ENCODE measurements at regions of chr4 and their contacts with region 1.

Region 1: DNA sequence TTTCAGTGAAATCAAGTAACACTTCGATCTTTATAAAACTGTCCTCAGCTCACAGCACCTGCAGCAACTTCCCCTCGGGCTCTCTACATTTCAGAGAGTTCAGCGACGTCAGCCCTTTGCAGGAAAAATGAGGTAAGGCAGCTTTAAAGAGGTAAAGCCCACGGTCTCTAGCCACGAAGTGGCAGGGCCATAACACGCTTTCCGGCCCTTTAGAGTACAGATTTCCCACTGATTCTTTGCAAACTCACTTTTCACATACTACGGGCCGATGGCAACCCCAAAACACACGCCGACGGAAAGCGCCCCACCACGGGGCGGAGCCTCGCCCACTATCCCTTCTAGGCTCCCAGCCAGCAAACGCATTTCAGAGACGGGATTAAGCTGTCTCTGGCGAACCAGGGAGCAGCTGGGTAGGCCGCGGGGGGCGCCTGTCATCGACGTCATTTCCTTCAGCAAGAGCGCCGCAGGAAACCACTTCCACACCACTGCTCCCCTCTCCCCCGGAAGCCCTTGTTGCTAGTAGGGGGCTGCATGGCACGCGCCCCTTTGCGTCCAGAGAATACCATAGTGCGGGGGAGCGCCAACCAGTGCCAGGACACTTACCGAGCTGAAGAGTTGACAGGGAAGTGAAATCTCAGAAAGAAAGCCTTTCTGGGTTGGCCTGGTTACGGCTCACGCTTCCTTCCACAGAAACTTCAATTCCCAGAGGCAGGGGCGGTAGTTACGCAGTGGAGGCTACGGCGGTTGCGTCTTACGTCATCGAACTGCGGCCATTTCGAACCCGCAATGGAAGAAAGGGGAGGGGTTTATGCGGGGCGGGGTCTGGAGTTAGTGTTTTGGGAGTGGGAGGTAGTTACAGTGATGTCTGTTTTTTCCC is at the start of gene TRMT10A:
- DNase-seq: peak; percentile 96
- H3K4me3 ChIP-seq: peak within 1 kb of the TSS; percentile 80
- H3K27ac ChIP-seq: peak within 1 kb of the TSS; percentile 78
- H3K4me1 ChIP-seq: peaks cover 12% of the 10 kb centered on the region
- CTCF ChIP-seq: no peak
- total RNA-seq, gene TRMT10A: 7.9 and 13.3 TPM in 2 replicates

Region 2: GRCh38 chr4:99013402-99013843 is 550.1 kb before region 1 on chr4:
- CTCF ChIA-PET with region 1: no interaction called
- POLR2A ChIA-PET with region 1: no interaction called
- intact Hi-C with region 1: no loop called
- DNase-seq: no peak
- H3K4me3 ChIP-seq: no peak overlapping the region
- H3K27ac ChIP-seq: no peak overlapping the region
- H3K4me1 ChIP-seq: no peaks in the 10 kb centered on the region
- CTCF ChIP-seq: no peak

Region 3: DNA sequence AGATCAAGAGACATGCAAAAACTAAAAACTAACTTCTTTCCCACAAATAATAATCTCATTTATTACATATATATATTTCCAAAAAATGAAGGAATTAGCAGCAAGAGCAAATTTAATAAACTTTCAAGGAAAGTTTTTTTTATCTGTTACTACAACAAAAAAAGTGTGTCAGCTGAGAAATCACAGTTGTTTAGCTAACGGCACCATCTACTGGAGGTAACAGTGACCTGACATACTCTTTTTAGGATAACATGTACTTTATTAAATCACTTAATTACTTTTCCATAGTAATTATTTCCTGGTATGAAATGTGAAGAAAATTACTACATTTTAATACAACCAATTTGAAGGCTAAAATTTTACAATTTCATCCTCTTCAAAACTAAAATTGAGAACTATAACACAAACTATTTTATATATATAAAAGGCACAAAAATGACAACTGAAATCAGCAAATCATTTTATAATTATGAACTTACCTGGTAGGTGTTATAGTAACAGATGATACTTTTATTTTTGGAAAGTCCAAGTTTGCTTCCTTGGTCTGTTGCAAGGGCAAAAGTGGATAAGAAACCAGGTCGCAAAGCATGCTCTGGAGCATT is 321.6 kb after region 1 on chr4:
- CTCF ChIA-PET with region 1: no interaction called
- POLR2A ChIA-PET with region 1: no interaction called
- intact Hi-C with region 1: loop called (anchors 1 kb)
- DNase-seq: peak; percentile 66
- H3K4me3 ChIP-seq: no peak overlapping the region
- H3K27ac ChIP-seq: no peak overlapping the region
- H3K4me1 ChIP-seq: no peaks in the 10 kb centered on the region
- CTCF ChIP-seq: peak; percentile 88

Region 4: DNA sequence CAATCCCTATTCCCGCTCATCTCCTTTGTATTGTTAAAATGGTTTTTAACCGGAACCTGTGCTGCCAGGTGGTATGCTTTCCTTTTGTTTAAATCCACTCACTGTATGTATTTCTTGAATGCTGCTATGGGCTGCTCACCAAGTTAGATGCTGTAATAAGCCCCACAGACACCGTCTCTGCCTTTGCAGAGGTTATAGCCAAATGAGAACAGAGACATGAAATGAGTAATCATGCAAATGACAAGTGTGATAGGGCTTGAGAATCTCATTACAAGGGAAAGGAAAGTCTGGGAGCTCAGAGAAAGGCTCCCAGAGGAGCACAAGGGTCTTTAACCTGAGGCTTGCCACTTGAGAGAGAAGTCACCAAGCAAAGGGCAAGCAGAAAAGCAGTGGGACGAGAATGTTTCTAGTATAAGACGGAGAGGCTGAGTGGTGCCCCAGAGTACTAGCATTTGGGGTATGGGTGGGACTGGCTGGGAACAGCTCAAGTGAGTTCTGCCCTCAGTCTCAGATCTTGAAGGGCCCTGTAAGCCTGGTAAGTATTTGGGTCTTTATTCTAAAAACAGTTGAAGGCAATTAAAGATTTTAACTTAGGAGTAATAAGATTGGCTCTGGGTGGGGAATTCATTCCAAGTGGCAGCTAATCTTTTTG is 497.3 kb after region 1 on chr4:
- CTCF ChIA-PET with region 1: no interaction called
- POLR2A ChIA-PET with region 1: no interaction called
- intact Hi-C with region 1: loop called (anchors 5 kb)
- DNase-seq: no peak
- H3K4me3 ChIP-seq: no peak overlapping the region
- H3K27ac ChIP-seq: no peak overlapping the region
- H3K4me1 ChIP-seq: no peaks in the 10 kb centered on the region
- CTCF ChIP-seq: no peak

Measured in OCI-LY7 (cell line).